ENCODE measurements at regions of chr19 and their contacts with region 1.

Region 1: DNA sequence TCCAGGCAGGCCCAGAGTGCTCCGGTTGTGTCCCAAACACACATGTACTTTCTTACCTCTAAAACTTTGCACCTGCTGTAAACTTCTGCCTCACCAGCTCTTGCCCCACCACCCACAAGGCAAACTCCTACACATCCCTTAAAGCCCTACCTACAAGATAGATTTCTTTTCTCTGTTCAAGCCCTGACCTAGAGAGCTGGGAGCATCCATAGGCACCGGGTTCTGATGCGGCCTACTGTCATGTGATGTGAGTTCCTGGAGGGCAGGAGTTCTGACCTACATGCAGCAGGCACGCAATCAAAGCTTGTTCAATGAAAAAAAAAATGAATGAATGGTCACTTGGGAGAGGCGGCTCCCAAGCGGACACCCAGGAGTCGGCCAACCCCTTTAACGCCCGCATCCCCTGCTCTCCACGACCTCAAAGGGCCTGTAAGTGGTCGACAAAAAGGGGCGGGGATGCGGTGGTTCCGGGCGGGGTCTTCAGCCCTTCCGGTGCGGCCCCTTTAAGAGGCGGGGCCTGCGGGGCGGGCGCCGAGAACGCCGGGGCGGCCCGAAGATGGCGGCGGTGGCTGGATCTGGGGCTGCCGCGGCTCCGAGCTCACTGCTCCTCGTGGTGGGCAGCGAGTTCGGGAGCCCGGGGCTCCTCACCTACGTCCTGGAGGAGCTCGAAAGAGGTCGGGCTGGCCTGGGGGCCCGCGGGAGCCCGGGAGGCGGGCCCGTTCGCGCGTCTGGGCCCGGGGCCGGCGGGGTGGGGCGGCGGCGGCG is at the start of gene MAP1S:
- DNase-seq: peak; percentile 83
- ATAC-seq: peak; percentile 82
- H3K4me3 Mint-ChIP-seq: peak within 1 kb of the TSS; percentile 93
- H3K27ac Mint-ChIP-seq: peak within 1 kb of the TSS; percentile 84
- H3K4me1 Mint-ChIP-seq: peaks cover 32% of the 10 kb centered on the region
- H3K27me3 Mint-ChIP-seq: peaks cover 2% of the 10 kb centered on the region
- total RNA-seq, gene MAP1S: 71.2 to 78.4 TPM

Region 2: GRCh38 chr19:17641181-17641580 is 77.9 kb before region 1 on chr19:
- POLR2A ChIA-PET with region 1: no interaction called
- DNase-seq: no peak
- ATAC-seq: no peak
- H3K4me3 Mint-ChIP-seq: no peak overlapping the region
- H3K27ac Mint-ChIP-seq: no peak overlapping the region
- H3K4me1 Mint-ChIP-seq: no peaks in the 10 kb centered on the region
- H3K27me3 Mint-ChIP-seq: peaks cover 4% of the 10 kb centered on the region

Region 3: GRCh38 chr19:17751103-17751911 is 32.2 kb after region 1 on chr19 and contains the start of gene FCHO1:
- POLR2A ChIA-PET with region 1: interaction called, 10 read pairs
- DNase-seq: peak; percentile 85
- ATAC-seq: peak; percentile 69
- H3K4me3 Mint-ChIP-seq: peak within 1 kb of the TSS; percentile 94
- H3K27ac Mint-ChIP-seq: peak within 1 kb of the TSS; percentile 93
- H3K4me1 Mint-ChIP-seq: peaks cover 48% of the 10 kb centered on the region
- H3K27me3 Mint-ChIP-seq: no peaks in the 10 kb centered on the region
- total RNA-seq, gene FCHO1: 74.2 to 77.9 TPM